ENCODE measurements at regions of chr3 and their contacts with region 1.

Region 1: GRCh38 chr3:151282921-151283320 is 4.6 kb upstream of the P2RY14 start:
- DNase-seq: peak; percentile 70
- H3K4me3 Mint-ChIP-seq: no peak overlapping the region
- H3K27ac Mint-ChIP-seq: peak overlapping the region; percentile 81
- H3K4me1 Mint-ChIP-seq: peaks cover 50% of the 10 kb centered on the region
- H3K27me3 Mint-ChIP-seq: no peaks in the 10 kb centered on the region

Region 2: DNA sequence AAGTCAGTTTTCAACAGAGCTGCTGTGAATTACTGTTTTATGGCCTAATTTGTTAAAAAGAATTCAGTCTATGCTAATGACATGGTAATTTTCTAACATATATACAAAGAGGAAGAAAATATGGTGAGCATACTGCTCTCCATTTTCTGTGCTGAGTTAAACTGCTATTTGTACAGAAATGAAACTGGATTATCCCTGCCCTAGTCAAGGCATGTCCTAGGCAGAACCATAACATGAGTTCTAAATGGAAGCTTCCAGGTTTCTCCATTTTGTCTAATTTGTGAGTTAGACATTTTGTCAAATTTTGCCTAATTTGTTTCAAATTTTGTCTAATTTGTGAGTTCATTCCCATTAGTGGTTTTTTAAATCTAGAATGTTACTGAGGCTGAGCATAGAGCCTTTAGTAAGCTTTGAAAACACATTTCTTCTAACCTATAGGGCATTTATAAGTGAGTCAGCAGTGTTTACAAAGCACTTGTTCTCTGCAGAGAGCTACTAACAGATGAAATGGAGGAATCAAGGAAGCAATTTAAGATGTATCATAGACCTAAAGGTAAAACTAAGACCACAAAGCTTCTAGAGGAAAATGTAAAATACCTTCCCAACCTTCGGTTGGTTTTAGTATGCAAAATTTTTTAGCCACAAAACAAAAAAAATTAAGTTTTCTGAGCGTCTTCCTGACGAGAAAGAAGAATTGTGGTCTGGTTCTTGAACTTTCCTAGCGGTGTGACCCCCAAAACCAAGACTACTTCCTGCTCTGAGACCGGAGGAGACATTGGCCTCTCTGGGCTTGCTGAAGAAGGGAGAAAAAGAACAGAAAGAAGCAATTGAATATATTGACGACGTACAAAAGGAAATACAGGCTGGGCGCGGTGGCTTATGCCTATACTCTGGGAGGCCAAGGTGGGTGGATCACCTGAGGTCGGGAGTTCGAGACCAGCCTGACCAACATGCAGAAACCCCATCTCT is 14.4 kb before region 1 on chr3:
- intact Hi-C with region 1: loop called (anchors 2 kb)
- DNase-seq: peak; percentile 89
- H3K4me3 Mint-ChIP-seq: peak overlapping the region; percentile 72
- H3K27ac Mint-ChIP-seq: peak overlapping the region; percentile 91
- H3K4me1 Mint-ChIP-seq: peaks cover 38% of the 10 kb centered on the region
- H3K27me3 Mint-ChIP-seq: peaks cover 2% of the 10 kb centered on the region

Region 3: GRCh38 chr3:151316267-151316991 is 33.5 kb after region 1 on chr3 and contains the start of gene GPR87:
- intact Hi-C with region 1: loop called (anchors 5 kb)
- DNase-seq: peak; percentile 61
- H3K4me3 Mint-ChIP-seq: peak within 1 kb of the TSS; percentile 30
- H3K27ac Mint-ChIP-seq: peak within 1 kb of the TSS; percentile 60
- H3K4me1 Mint-ChIP-seq: peaks cover 18% of the 10 kb centered on the region
- H3K27me3 Mint-ChIP-seq: peaks cover 6% of the 10 kb centered on the region
- total RNA-seq, gene GPR87: 1.0 and 1.4 TPM in 2 replicates

Region 4: DNA sequence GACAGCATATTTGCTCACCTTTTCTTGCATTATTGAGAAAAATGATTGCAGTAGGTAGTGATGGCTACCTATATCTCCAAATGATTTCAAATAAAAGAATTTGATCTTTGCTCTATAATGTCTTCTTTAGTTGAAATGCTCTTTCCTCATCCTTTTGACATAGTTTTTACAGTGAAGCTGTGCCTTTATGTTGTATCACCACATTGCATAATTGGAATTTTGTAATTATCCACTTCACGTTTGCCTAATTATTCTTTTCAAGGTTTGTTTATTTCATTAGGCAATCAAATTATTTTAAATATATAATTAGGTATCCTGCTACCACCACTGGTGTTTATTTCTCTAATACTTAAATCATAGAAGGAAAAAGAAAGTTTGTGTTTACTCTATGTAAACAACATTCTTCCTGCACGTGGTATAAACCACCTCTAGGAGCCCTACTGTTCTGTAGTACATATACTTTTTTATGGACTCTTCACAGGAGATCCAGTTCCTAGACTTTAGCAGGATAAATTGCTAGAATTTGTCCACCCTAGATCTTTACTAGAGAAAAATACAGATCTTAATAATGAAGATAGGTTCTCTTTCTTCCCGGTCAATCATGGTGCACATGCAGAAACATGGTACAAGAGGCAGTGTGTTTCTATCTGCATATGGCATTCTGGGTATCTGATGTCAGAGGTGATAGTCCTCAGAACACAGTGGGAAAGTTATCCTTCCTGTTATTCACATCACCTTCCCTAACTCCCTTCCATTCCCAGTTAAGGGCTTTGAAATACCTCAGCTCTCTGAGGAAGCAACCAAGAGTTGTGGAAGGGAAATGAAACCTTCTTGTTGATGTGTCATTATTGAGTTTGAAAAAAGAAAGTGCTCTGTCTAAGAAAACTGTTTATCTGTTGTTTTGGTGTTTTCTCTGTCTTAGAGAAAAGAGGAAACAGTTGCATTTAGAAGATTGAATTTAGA is 68.0 kb after region 1 on chr3:
- intact Hi-C with region 1: no loop called
- DNase-seq: no peak
- H3K4me3 Mint-ChIP-seq: peak overlapping the region; percentile 45
- H3K27ac Mint-ChIP-seq: no peak overlapping the region
- H3K4me1 Mint-ChIP-seq: peaks cover 17% of the 10 kb centered on the region
- H3K27me3 Mint-ChIP-seq: peaks cover 35% of the 10 kb centered on the region

Measured in activated CD4-positive, alpha-beta T cell treated with anti-CD3 and anti-CD28 coated beads, Interleukin-2, amount 10 ng/mL, durations not matched to agents 24 days and 14 days (primary cell).